ENCODE measurements at regions of chr5 and their contacts with region 1.

Region 1: DNA sequence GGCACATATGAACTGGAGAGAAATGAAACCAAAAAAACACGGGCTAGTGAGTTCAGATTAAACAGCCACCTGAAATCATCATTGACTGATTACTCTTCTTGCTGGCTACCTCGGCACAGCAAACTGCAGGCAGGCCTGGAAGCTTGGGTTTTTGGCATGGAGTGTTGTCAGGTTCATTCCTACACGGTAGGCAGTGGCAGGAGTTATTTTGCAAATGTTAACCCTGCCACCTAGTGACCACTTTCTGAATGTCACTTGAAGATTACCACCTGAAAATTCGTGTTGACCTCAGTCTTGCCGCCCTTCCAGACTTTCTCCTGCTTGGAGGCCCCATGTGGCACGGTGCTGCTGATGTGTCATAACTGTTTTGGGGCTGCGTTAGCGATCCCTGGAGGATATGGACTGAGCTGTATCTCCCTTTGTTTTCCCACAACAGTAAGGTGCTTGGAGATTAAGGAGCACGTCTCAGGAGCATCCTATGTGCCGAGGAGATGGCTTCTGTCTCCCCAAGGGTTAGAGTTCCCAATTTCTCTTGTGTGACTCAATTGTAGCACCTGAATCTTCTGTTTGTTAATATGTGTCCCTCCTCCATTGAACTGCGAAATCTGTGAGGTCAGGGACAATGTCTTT is 12.7 kb upstream of the CD180 start:
- DNase-seq: peak; percentile 69
- ATAC-seq: peak; percentile 81
- H3K4me3 ChIP-seq: no peak overlapping the region
- H3K27ac ChIP-seq: no peak overlapping the region
- H3K4me1 ChIP-seq: peaks cover 2 to 43% of the 10 kb centered on the region in 2 experiments
- H3K27me3 ChIP-seq: no peaks in the 10 kb centered on the region
- CTCF ChIP-seq: peak; percentile 62 to 86 (median 73)
- POLR2A ChIP-seq: no peak
- RAD21 ChIP-seq: peak; percentile 92

Region 2: DNA sequence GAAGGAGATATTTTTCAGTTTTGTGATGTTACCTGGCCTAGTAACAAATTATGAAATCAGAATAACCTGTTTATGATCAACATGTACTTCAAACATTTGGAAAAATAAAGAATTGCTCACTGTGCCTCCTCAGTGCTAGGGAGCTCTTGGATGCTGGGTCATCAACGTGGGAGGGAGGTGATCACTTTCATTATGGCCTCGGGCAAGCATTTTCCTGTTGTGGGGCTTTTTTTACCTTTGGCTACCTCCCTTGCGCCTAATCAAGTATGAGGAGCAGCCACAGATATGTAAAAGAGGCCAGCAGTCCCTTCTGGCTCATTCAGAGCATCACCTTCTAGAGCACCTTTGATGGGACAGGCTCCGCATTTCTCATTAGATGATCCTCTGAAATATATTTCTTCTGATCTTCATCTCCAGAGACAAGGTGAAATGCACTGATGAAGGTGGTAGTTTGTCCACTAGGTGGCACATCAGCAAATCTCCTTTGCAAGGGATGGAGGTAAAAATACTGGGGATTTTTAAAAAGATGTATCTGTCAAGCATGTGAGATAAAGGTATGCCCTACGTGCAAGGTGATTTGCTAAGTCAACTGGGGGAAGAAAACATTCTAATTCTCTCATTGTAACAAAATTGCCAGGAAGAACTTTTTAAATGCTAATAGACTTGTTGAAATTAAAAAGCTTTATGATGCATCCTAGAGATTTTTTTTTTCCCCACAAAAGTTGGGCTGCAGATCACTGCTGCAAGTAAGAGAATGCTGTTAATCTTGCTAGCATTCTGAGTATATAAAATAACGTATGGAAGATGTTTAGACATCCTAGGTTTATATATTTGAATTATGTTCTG is 394.9 kb before region 1 on chr5:
- CTCF ChIA-PET with region 1: interaction called, 6 read pairs
- POLR2A ChIA-PET with region 1: no interaction called
- RAD21 ChIA-PET with region 1: no interaction called
- intact Hi-C with region 1: loop called (anchors 5 kb)
- DNase-seq: peak; percentile 28
- ATAC-seq: peak; percentile 73
- H3K4me3 ChIP-seq: no peak overlapping the region
- H3K27ac ChIP-seq: no peak overlapping the region
- H3K4me1 ChIP-seq: no peaks in the 10 kb centered on the region
- H3K27me3 ChIP-seq: peaks cover 61% of the 10 kb centered on the region
- CTCF ChIP-seq: peak; percentile 43 to 68 (median 64); a peak in 5 of 6 replicates
- POLR2A ChIP-seq: no peak
- RAD21 ChIP-seq: peak; percentile 53

Region 3: GRCh38 chr5:66987949-66988838 is 221.1 kb before region 1 on chr5:
- CTCF ChIA-PET with region 1: no interaction called
- POLR2A ChIA-PET with region 1: no interaction called
- RAD21 ChIA-PET with region 1: no interaction called
- intact Hi-C with region 1: loop called (anchors 5 kb)
- DNase-seq: no peak
- ATAC-seq: peak; percentile 70; the same call in 1 of the 2 replicates
- H3K4me3 ChIP-seq: no peak overlapping the region
- H3K27ac ChIP-seq: no peak overlapping the region
- H3K4me1 ChIP-seq: no peaks in the 10 kb centered on the region
- H3K27me3 ChIP-seq: peaks cover 50% of the 10 kb centered on the region
- CTCF ChIP-seq: peak; percentile 26 to 84 (median 75); a peak in 5 of 6 replicates
- POLR2A ChIP-seq: no peak
- RAD21 ChIP-seq: peak; percentile 38; the same call in 1 of the 2 replicates

Region 4: GRCh38 chr5:67003935-67004729 is 205.1 kb before region 1 on chr5:
- CTCF ChIA-PET with region 1: no interaction called
- POLR2A ChIA-PET with region 1: no interaction called
- RAD21 ChIA-PET with region 1: no interaction called
- intact Hi-C with region 1: loop called (anchors 5 kb)
- DNase-seq: peak; percentile 53
- ATAC-seq: peak; percentile 90
- H3K4me3 ChIP-seq: peak overlapping the region; percentile 36 to 53
- H3K27ac ChIP-seq: peak overlapping the region; percentile 50
- H3K4me1 ChIP-seq: peaks cover 4 to 17% of the 10 kb centered on the region in 2 experiments
- H3K27me3 ChIP-seq: peaks cover 56% of the 10 kb centered on the region
- CTCF ChIP-seq: no peak
- POLR2A ChIP-seq: no peak
- RAD21 ChIP-seq: no peak

Region 5: DNA sequence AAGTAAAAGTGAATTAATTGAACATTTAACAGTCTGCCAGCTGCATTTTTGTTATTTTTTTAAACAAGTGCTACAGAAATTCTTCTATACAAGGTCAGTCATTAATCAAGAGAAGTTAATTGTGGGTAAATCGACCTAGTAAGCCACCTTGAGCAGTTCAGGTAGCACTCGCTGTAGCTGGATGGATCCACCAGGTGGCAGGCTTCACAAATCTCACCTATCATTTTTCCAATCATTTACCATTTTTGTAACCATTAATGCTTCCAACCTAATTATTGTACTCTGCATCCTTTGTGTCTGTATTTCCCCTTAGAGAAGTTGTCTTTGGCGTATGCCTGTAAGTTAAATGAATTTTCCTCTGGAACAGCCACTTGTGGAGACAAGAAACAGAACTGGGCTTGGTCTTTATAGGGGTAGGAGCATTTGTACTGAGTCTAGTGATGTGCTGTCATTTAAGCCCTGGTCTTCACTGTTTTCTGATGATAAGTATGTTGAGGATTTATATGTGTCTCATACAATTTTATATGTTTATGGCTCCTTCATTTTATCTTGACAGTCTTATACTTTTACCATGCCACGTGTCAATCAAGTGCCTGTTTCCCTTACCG is 52.2 kb before region 1 on chr5:
- CTCF ChIA-PET with region 1: interaction called, 30 read pairs
- POLR2A ChIA-PET with region 1: no interaction called
- RAD21 ChIA-PET with region 1: no interaction called
- intact Hi-C with region 1: loop called (anchors 1 kb)
- DNase-seq: peak; percentile 29
- ATAC-seq: peak; percentile 89
- H3K4me3 ChIP-seq: no peak overlapping the region
- H3K27ac ChIP-seq: no peak overlapping the region
- H3K4me1 ChIP-seq: peaks cover 4 to 7% of the 10 kb centered on the region in 2 experiments
- H3K27me3 ChIP-seq: peaks cover 16% of the 10 kb centered on the region; the same call in 1 of the 2 replicates
- CTCF ChIP-seq: peak; percentile 59 to 88 (median 83); a peak in 5 of 6 replicates
- POLR2A ChIP-seq: no peak
- RAD21 ChIP-seq: peak; percentile 68

Region 6: GRCh38 chr5:67165526-67166459 is 43.5 kb before region 1 on chr5:
- CTCF ChIA-PET with region 1: interaction called, 20 read pairs
- POLR2A ChIA-PET with region 1: no interaction called
- RAD21 ChIA-PET with region 1: interaction called in 1 of 2 experiments, 3 read pairs
- intact Hi-C with region 1: loop called (anchors 1 kb)
- DNase-seq: peak; percentile 73
- ATAC-seq: peak; percentile 86
- H3K4me3 ChIP-seq: peak overlapping the region; percentile 37 to 51
- H3K27ac ChIP-seq: peak overlapping the region; percentile 65
- H3K4me1 ChIP-seq: peaks cover 10 to 22% of the 10 kb centered on the region in 2 experiments
- H3K27me3 ChIP-seq: no peaks in the 10 kb centered on the region
- CTCF ChIP-seq: peak; percentile 72 to 80 (median 77)
- POLR2A ChIP-seq: peak; percentile 59
- RAD21 ChIP-seq: peak; percentile 72